Activated CD4-positive, alpha-beta T cell treated with anti-CD3 and anti-CD28 coated beads, Interleukin-2, amount 10 ng/mL, durations not matched to agents 7 days and 5 days (primary cell): ENCODE measurements at regions of chr1 and their contacts with region 1.

Region 1: GRCh38 chr1:10430216-10431069 is at the start of gene CENPS:
- DNase-seq: peak; percentile 81
- H3K4me3 Mint-ChIP-seq: peak within 1 kb of the TSS; percentile 82
- H3K27ac Mint-ChIP-seq: peak within 1 kb of the TSS; percentile 91
- H3K4me1 Mint-ChIP-seq: peaks cover 31% of the 10 kb centered on the region
- H3K27me3 Mint-ChIP-seq: no peaks in the 10 kb centered on the region
- total RNA-seq, gene CENPS: 16.1 to 20.7 TPM

Region 2: GRCh38 chr1:10415211-10415930 is 15.1 kb before region 1 on chr1:
- CTCF ChIA-PET with region 1: interaction called, 12 read pairs
- POLR2A ChIA-PET with region 1: no interaction called
- DNase-seq: peak; percentile 35
- H3K4me3 Mint-ChIP-seq: peak overlapping the region; percentile 31
- H3K27ac Mint-ChIP-seq: peak overlapping the region; percentile 87
- H3K4me1 Mint-ChIP-seq: peaks cover 16% of the 10 kb centered on the region
- H3K27me3 Mint-ChIP-seq: no peaks in the 10 kb centered on the region

Region 3: DNA sequence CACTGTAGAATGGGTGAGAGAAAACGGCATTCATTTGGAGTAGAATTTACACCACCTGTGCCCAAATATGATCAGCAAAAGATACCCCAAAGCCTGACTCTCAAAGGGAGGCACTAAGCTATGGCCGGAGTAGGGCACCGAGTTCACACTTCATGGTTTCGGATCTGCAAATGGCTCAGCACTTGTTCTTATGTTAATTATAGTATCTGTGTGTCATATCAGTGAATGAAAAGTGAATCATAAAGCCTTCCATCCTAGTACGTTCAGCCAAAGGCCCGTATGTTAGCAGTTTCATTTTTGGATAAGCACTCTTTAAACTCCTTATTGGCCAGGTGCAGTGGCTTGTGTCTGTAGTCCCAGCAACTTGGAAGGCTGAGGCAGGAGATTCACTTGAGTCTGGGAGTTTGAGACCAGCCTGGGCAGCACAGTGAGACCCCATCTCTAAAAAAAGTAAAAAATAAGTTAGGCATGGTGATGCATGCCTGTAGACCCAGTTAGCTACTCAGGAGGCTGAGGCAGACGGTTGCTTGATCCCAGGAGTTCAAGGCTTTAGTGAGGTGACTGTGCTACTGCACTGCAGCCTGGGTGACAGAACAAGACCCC is 14.5 kb after region 1 on chr1:
- CTCF ChIA-PET with region 1: interaction called, 16 read pairs
- POLR2A ChIA-PET with region 1: no interaction called
- DNase-seq: no peak
- H3K4me3 Mint-ChIP-seq: no peak overlapping the region
- H3K27ac Mint-ChIP-seq: no peak overlapping the region
- H3K4me1 Mint-ChIP-seq: no peaks in the 10 kb centered on the region
- H3K27me3 Mint-ChIP-seq: no peaks in the 10 kb centered on the region